PC-9 (cell line): ENCODE measurements at regions of chr5 and their contacts with region 1.

Region 1: DNA sequence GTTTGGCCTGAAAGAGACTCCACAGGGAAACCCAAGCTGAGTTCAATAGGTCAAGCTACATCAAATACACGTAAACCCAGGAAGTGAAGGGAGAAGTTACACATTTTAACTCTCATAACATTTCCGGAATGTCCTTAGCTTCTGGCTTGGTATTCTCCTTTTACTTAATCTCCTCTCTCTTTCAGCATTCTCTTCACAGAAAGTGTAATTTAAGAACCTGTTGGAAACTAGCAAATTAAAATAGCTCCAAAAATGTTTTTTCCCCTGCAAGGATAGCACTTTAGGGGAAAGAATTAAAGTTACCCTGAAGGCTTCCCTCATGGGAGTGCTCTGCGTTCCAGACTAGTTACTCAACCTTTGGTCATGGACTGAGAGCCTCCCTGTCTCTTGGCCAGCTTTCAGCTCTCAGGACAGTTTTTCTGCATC is 292.7 kb upstream of the TARS1 start:
- DNase-seq: peak; percentile 73 to 81
- H3K4me3 ChIP-seq: peak overlapping the region; percentile 32; the same call in 1 of the 2 replicates
- H3K27ac ChIP-seq: peak overlapping the region; percentile 81
- H3K4me1 ChIP-seq: peaks cover 31% of the 10 kb centered on the region
- H3K27me3 ChIP-seq: no peaks in the 10 kb centered on the region
- CTCF ChIP-seq: no peak

Region 2: DNA sequence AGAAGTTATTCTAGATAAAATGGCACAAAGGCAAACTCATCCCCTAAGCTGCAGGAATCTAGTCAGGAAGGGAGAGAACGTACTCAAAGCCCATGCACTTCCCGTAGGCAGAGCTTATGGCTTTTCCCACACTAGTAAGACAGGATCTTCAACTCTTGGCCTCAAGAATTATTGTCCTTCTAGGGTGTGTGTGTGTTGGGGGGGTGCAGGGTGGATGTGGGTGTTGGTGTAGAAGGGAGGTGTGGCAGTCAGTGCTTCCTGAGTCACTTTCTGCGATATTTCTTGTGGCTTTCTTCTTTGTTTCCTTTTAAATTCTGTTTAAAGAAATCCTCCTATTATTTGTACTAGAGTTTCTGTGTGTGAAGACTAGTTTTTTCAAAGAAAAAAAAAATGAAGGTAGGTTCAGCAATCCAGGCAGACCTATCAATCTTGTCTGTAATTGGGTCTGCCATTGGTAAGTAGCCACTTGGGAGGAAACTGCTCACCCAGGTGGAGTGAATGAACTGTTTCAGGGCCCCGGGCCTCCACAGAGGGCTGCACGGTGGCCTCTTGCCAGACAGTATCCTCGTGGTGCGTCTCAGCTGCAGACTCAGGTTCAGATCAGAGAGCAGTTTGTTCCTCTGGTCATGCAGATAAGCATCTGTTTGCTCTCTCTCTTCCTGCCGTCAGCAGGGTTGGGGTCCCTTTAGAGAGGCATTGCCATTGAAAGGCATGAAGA is 305.1 kb before region 1 on chr5:
- CTCF ChIA-PET with region 1: no interaction called
- POLR2A ChIA-PET with region 1: no interaction called
- intact Hi-C with region 1: loop called (anchors 1 kb)
- DNase-seq: peak; percentile 58 to 92
- H3K4me3 ChIP-seq: no peak overlapping the region
- H3K27ac ChIP-seq: peak overlapping the region; percentile 6; the same call in 1 of the 2 replicates
- H3K4me1 ChIP-seq: peaks cover 16% of the 10 kb centered on the region
- H3K27me3 ChIP-seq: peaks cover 25% of the 10 kb centered on the region
- CTCF ChIP-seq: no peak

Region 3: GRCh38 chr5:33008751-33009418 is 139.2 kb before region 1 on chr5:
- CTCF ChIA-PET with region 1: no interaction called
- POLR2A ChIA-PET with region 1: no interaction called
- intact Hi-C with region 1: loop called (anchors 1 kb)
- DNase-seq: peak; percentile 73 to 92
- H3K4me3 ChIP-seq: no peak overlapping the region
- H3K27ac ChIP-seq: peak overlapping the region; percentile 48
- H3K4me1 ChIP-seq: peaks cover 14% of the 10 kb centered on the region
- H3K27me3 ChIP-seq: no peaks in the 10 kb centered on the region
- CTCF ChIP-seq: no peak

Region 4: DNA sequence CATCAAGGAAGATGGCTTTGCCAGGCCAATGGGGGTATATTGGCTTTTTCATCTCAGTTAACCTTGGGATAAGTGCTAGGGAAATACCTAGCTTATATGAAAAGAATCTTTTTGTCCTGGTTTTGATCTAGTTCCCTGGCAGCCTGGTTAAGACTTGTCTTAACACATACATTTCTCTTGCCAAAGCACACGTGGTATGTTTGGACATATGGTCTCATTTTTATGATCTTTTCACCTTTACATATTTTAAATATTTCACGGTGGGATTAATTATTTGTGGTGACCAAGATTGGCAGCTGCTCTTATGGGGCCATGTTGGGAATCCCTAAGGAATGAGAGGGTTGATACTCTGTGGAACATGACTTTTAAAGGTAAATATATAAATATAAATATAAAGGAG is 124.4 kb before region 1 on chr5:
- CTCF ChIA-PET with region 1: no interaction called
- POLR2A ChIA-PET with region 1: no interaction called
- intact Hi-C with region 1: no loop called
- DNase-seq: no peak
- H3K4me3 ChIP-seq: no peak overlapping the region
- H3K27ac ChIP-seq: no peak overlapping the region
- H3K4me1 ChIP-seq: no peaks in the 10 kb centered on the region
- H3K27me3 ChIP-seq: no peaks in the 10 kb centered on the region
- CTCF ChIP-seq: no peak

Region 5: DNA sequence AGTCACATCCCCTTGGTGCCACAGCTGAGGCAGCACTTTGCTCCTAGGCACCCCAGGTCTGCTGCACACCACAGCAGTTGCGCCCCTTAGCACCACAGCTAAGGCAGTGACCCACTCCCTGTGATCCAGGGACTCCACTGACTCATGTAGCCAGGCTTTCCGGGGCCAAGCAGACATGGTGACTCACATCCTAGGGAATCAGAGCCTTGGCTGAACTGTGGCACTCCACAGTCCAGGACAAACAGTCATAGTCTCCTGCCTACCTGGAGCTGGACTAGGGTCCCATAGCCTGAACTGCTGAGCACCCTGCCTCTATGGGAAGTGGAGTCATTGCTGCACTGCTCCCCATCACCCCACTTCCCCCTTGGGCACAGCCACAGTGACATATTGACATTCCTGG is 98.2 kb before region 1 on chr5:
- CTCF ChIA-PET with region 1: no interaction called
- POLR2A ChIA-PET with region 1: interaction called, 9 read pairs
- intact Hi-C with region 1: loop called (anchors 2 kb)
- DNase-seq: peak; percentile 58 to 86
- H3K4me3 ChIP-seq: no peak overlapping the region
- H3K27ac ChIP-seq: peak overlapping the region; percentile 41
- H3K4me1 ChIP-seq: peaks cover 32% of the 10 kb centered on the region
- H3K27me3 ChIP-seq: no peaks in the 10 kb centered on the region
- CTCF ChIP-seq: no peak

Region 6: DNA sequence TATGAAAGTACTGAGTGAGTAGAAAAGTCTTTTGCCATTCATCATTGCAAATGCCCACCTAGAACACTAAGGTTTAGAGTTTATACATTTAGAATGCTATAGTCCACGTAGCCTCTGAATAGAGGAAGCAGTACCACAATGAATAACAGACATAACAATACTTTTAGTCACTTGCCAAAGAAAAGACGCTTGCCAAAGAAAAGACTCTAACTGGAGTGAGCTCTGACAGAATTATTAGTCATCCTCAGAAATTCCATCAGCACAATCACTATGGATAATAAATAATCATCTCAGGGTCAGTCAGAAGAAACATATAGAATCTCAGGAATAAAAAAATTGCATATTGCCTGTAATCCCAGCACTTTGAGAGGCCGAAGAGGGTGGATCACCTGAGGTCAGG is 124.2 kb after region 1 on chr5:
- CTCF ChIA-PET with region 1: no interaction called
- POLR2A ChIA-PET with region 1: no interaction called
- intact Hi-C with region 1: loop called (anchors 5 kb)
- DNase-seq: peak; percentile 30 to 80
- H3K4me3 ChIP-seq: no peak overlapping the region
- H3K27ac ChIP-seq: peak overlapping the region; percentile 62
- H3K4me1 ChIP-seq: peaks cover 14% of the 10 kb centered on the region; the same call in 1 of the 2 replicates
- H3K27me3 ChIP-seq: no peaks in the 10 kb centered on the region
- CTCF ChIP-seq: no peak